ENCODE measurements at regions of chr14 and their contacts with region 1.

Region 1: DNA sequence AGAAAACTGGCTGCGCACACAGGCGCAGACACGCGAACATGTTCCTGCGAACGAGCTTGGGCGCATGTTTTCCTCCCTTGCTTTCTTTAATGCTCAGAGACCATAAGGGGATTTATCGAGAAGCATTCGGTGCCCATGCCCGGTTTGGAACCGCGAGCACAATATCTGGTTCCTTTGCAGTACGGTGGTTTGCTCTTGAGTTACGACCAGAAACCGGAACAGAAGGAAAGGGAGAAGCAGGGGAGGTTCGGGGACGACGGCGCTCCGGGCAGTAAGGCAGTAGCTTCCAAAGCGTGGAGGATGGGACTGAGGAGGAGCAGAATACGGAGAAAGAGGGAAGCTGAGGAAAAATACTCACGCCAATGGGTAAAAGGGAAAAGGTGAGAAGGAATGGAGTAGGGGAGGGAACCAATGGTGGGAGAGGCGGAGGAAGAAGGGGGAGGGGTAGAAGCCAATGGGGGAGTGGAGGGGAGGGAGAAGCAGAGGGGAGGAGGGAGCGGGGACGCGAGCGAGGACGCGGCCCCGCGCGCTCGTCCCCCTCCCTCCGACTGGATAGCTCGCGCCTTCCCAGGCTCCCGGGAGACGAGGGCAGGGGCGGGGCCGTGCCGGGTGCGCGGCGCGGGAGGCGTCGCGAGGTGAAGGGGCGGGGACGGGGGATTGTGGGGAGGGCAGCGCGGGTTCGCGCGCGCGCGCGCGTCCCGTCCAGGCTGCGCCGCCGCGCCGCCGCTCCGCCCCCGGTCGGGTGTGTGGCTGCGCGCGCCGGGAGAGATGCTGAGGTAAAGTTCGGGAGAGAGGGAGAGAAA is 625 bp upstream of the ARHGAP5 start:
- DNase-seq: peak; percentile 73
- H3K4me3 Mint-ChIP-seq: peak overlapping the region; percentile 97
- H3K27ac Mint-ChIP-seq: peak overlapping the region; percentile 91
- H3K4me1 Mint-ChIP-seq: peaks cover 38% of the 10 kb centered on the region
- H3K27me3 Mint-ChIP-seq: peaks cover 23% of the 10 kb centered on the region

Region 2: DNA sequence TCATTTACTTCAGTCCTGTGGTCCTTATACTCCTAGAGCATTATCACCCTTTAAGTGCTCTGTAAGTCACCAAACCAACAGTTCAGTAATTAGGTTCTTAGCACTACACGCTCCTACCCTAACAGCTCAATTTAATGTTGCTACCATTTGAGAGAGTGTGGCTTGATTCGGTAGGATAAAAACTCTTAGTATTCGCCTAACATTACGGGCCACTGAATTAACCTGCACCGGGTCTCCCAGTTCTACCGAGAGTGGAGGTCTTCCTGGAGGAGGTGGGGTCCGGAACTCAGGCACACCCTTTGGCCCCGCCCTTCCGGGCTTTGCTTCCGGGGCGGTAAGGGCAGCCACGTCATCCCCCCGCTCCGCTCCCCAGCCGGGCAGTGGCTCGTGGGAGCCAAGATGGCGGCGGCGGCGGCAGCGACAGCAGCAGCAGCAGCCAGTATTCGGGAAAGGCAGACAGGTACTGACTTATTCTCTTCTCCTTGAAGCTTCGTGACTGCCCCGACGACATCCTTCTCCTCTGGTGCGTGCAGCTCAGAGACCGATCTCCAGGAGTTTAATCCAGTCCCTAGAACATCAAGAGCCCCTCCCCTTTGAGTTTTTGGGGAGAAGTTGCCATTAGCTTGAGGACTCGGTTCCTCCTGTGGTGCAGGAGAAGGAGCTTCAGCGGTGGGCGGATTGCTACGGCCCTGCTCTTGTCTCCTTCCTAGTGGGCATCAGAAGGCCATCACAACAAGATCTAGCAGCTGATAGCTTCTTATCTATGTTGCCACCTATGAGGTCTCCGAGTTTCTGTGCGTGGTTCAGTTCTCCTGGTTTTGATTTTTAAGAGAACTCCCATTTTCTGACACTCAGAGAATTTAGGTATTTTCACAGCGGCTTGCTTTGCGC is 1454.3 kb before region 1 on chr14 and contains the start of gene SCFD1:
- intact Hi-C with region 1: loop called (anchors 5 kb)
- DNase-seq: peak; percentile 93
- H3K4me3 Mint-ChIP-seq: peak within 1 kb of the TSS; percentile 95
- H3K27ac Mint-ChIP-seq: peak within 1 kb of the TSS; percentile 94
- H3K4me1 Mint-ChIP-seq: peaks cover 29% of the 10 kb centered on the region
- H3K27me3 Mint-ChIP-seq: no peaks in the 10 kb centered on the region
- total RNA-seq, gene SCFD1: 72.8 and 76.1 TPM in 2 replicates

Region 3: GRCh38 chr14:31456841-31457664 is 619.4 kb before region 1 on chr14 and contains the start of gene DTD2:
- intact Hi-C with region 1: loop called (anchors 2 kb)
- DNase-seq: peak; percentile 86
- H3K4me3 Mint-ChIP-seq: peak within 1 kb of the TSS; percentile 98
- H3K27ac Mint-ChIP-seq: peak within 1 kb of the TSS; percentile 97
- H3K4me1 Mint-ChIP-seq: peaks cover 24% of the 10 kb centered on the region
- H3K27me3 Mint-ChIP-seq: peaks cover 1% of the 10 kb centered on the region
- total RNA-seq, gene DTD2: 26.7 and 26.9 TPM in 2 replicates

Region 4: GRCh38 chr14:31926123-31926522 is 150.4 kb before region 1 on chr14:
- intact Hi-C with region 1: loop called (anchors 2 kb)
- DNase-seq: no peak
- H3K4me3 Mint-ChIP-seq: no peak overlapping the region
- H3K27ac Mint-ChIP-seq: no peak overlapping the region
- H3K4me1 Mint-ChIP-seq: peaks cover 20% of the 10 kb centered on the region
- H3K27me3 Mint-ChIP-seq: peaks cover 1% of the 10 kb centered on the region

Region 5: DNA sequence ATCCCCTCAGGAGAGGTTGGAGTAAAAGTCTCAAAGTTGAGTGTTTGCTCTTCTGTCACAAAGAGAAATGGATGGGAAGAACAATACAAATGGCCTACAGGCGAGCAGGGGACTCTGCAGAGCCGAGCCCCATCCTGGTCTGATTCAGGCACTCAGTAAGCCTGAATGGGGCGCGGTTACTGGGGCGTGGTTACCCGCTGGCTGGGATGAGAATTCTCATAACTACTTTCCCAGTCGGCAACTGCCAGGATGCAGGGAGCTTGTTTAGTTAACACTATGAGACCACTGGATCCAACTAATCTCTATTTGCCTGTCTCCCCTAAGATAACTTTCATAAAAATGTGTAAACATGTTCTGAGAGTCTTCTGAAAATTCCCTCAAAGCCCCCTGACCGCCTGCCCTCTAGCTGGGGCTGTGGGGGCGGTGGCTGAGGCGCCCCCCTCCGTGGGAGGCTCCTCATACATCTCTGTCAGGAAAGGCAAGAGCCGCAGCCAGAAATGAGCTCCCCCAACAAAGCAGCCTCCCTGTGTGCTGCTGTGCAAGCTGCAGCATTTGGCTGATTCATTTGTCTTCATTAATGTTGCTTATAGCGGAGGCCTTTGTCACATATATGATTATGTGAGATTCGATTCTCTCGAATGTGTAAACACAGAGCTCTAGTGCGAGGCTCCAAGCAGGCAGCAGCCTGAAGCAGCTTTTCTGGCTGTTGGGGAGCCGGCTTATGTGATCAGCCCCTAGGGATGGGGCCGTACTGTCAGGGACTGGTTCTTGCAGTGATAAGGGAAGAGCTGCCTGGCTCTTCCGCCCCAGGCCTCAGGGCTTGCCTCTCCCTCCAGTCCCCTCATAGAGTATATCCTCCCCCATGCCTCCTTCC is 125.5 kb before region 1 on chr14:
- intact Hi-C with region 1: no loop called
- DNase-seq: no peak
- H3K4me3 Mint-ChIP-seq: no peak overlapping the region
- H3K27ac Mint-ChIP-seq: no peak overlapping the region
- H3K4me1 Mint-ChIP-seq: peaks cover 22% of the 10 kb centered on the region
- H3K27me3 Mint-ChIP-seq: peaks cover 14% of the 10 kb centered on the region

Region 6: GRCh38 chr14:32090686-32091085 is 14.2 kb after region 1 on chr14:
- intact Hi-C with region 1: no loop called
- DNase-seq: no peak
- H3K4me3 Mint-ChIP-seq: no peak overlapping the region
- H3K27ac Mint-ChIP-seq: no peak overlapping the region
- H3K4me1 Mint-ChIP-seq: peaks cover 16% of the 10 kb centered on the region
- H3K27me3 Mint-ChIP-seq: no peaks in the 10 kb centered on the region

Region 7: GRCh38 chr14:32202998-32203882 is 126.8 kb after region 1 on chr14 and contains the start of gene RNU6-8:
- intact Hi-C with region 1: loop called (anchors 1 kb)
- DNase-seq: peak; percentile 80
- H3K4me3 Mint-ChIP-seq: peak within 1 kb of the TSS; percentile 88
- H3K27ac Mint-ChIP-seq: peak within 1 kb of the TSS; percentile 97
- H3K4me1 Mint-ChIP-seq: peaks cover 39% of the 10 kb centered on the region
- H3K27me3 Mint-ChIP-seq: peaks cover 22% of the 10 kb centered on the region
- total RNA-seq, gene RNU6-8: not detected in 2 replicates

Region 8: GRCh38 chr14:32560209-32560857 is 483.9 kb after region 1 on chr14:
- intact Hi-C with region 1: loop called (anchors 1 kb)
- DNase-seq: no peak
- H3K4me3 Mint-ChIP-seq: no peak overlapping the region
- H3K27ac Mint-ChIP-seq: no peak overlapping the region
- H3K4me1 Mint-ChIP-seq: peaks cover 4% of the 10 kb centered on the region
- H3K27me3 Mint-ChIP-seq: no peaks in the 10 kb centered on the region